Body of pancreas (tissue), 4 donors: ENCODE measurements at regions of chr15 and their contacts with region 1.

Region 1: DNA sequence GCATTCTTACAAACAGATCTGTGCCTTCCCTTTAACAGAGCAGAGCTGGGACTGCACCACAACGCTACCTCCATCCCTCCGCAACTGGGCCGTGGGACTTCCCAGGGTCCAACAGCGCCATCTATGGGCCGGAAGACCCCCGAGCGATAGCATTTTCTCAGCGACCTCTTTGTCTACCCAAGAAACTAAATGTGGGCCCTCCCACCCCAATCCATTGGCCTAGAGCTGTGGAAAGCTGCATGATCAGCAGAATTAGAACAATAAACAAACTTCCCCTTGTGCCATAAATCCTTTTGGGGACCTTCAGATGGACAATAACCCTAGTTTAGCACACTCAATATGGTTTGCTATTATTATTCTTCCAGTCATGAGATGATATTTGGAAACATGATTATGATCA is 74.7 kb upstream of the NTRK3 start:
- DNase-seq: peak; percentile 5 to 23 (median 16)
- ATAC-seq: no peak
- H3K4me3 ChIP-seq: no peak overlapping the region
- H3K27ac ChIP-seq: no peak overlapping the region
- H3K4me1 ChIP-seq: no peaks in the 10 kb centered on the region
- H3K27me3 ChIP-seq: no peaks in the 10 kb centered on the region
- CTCF ChIP-seq: peak in 4 of 7 experiments; percentile 7 to 29 (median 12)
- POLR2A ChIP-seq: no peak

Region 2: DNA sequence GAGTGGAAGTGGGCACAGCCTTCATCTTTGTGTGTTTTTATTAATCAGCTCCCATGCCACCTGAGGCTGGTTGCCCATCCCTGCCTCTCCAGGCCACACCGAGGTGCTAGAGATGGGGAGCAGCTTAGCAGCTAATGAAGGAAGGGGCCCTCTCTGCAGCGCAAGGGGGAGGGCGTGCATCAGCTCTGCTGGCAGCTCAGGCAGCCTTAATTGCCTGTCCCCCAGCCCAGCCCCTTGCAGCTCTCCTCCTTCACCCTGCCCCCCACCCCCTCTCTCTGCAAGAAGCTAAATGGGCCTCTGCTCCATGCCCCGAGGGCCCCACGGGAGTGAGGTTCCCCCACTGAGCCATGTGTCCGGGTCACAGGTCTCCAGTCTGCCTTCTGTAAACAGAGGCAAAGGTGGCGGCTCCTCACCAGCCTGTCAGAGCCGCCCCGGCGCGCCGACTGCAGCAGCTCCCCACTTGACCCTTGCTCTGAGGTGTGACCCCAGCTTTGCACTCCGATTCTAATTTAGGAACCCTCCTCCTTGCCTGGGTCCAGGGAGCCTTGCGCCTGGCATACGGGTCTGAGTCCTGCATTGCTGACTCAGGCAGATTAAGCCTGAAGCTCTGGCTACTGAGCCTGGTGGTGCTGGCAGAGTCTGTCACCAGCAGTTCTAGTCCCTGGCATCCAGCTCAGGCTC is 46.8 kb before region 1 on chr15:
- intact Hi-C with region 1: loop called (anchors 5 kb)
- DNase-seq: no peak
- ATAC-seq: no peak
- H3K4me3 ChIP-seq: no peak overlapping the region
- H3K27ac ChIP-seq: no peak overlapping the region
- H3K4me1 ChIP-seq: no peaks in the 10 kb centered on the region
- H3K27me3 ChIP-seq: no peaks in the 10 kb centered on the region
- CTCF ChIP-seq: no peak
- POLR2A ChIP-seq: no peak

Region 3: GRCh38 chr15:88375234-88375927 is 44.1 kb after region 1 on chr15:
- intact Hi-C with region 1: no loop called
- DNase-seq: no peak
- ATAC-seq: no peak
- H3K4me3 ChIP-seq: no peak overlapping the region
- H3K27ac ChIP-seq: no peak overlapping the region
- H3K4me1 ChIP-seq: no peaks in the 10 kb centered on the region
- H3K27me3 ChIP-seq: peaks cover 0 to 2% of the 10 kb centered on the region in 2 donors
- CTCF ChIP-seq: no peak
- POLR2A ChIP-seq: no peak

Region 4: GRCh38 chr15:88727439-88727838 is 396.2 kb after region 1 on chr15:
- intact Hi-C with region 1: no loop called
- DNase-seq: peak; percentile 55 to 81 (median 66)
- ATAC-seq: peak; percentile 56
- H3K4me3 ChIP-seq: no peak overlapping the region
- H3K27ac ChIP-seq: no peak overlapping the region
- H3K4me1 ChIP-seq: no peaks in the 10 kb centered on the region
- H3K27me3 ChIP-seq: no peaks in the 10 kb centered on the region
- CTCF ChIP-seq: no peak
- POLR2A ChIP-seq: no peak